ENCODE measurements at regions of chr2 and their contacts with region 1.

Region 1: DNA sequence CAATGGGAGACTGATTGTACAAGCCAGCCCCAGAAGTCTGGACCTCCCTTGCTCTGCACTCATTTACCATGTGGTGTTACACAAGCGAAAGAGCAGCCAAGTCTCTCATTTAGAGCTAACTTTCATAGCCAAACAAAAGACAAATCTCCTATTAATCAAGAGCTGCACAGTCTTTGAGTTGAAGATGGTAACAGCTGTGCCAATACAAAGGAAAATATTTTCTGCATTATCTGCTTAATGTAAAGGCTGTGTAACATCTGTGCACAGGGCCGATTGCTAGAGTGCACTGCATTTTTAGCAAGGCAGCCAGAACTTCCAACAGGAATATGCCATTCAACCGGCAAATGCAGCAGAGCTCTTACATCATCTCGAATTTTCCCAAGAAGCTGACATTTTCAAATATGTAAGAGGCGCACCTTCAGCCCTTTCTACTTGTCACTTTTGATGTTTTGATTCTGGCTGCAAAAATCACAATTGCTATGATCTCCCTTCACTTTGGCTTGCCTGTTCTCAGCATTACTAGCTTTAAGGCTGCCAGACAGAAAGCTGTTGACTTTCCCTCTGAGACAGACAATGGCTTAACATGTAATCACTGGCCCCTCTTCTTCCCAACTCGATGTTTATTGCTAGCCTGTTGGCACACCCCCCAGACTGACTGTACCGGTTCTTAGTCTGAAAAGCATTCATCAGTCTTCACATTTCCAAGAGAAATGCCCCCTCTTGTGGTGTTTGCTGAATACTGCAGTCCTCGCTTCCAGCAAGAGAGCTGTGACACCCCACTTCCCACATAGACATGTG is 96.9 kb upstream of the TANK start:
- DNase-seq: peak; percentile 51
- ATAC-seq: peak; percentile 96
- H3K4me3 ChIP-seq: no peak overlapping the region
- H3K27ac ChIP-seq: no peak overlapping the region
- H3K4me1 ChIP-seq: no peaks in the 10 kb centered on the region; the same call in 1 of the 2 replicates
- H3K27me3 ChIP-seq: no peaks in the 10 kb centered on the region
- CTCF ChIP-seq: peak; percentile 88 to 91 (median 89)
- EP300 ChIP-seq: no peak
- POLR2A ChIP-seq: no peak
- RAD21 ChIP-seq: peak; percentile 84

Region 2: DNA sequence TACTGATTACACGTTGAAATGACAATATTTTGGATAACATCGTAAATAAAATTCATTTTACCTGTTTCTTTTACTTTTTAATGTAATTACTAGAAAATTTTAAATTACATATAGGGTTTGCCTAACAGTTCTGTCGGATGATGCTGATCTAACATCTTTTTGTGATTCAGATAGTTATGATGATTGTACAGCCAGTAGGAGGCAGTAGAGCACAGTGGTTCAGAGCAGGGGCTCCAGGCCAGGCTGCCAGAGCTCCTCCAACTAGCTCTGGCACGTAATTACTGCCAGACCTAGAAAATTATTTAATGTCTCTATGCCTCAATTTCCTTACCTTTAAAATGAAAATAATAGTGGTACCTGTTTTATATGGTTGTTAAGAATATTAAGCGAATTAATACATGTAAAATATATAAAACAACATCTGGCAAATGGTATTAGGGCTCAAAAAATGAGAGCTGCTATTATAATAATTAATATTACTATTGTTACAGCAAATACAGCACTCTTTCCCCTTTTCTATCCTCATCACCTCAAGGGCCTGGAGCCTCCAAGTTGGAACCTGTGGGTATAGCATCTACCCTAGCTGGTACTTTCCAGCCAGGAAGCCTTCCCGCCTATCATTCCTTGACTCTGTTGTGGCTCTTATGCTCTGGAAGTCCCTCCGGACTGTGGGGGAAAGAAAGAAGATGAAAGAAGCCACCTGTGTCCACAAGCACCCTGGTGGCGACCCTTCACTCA is 953.3 kb before region 1 on chr2:
- CTCF ChIA-PET with region 1: interaction called, 3 read pairs
- POLR2A ChIA-PET with region 1: no interaction called
- RAD21 ChIA-PET with region 1: interaction called, 4 read pairs
- SMC1A ChIA-PET with region 1: no interaction called
- in situ Hi-C with region 1: no loop called
- intact Hi-C with region 1: loop called (anchors 10 kb)
- DNase-seq: no peak
- ATAC-seq: peak; percentile 84
- H3K4me3 ChIP-seq: no peak overlapping the region
- H3K27ac ChIP-seq: no peak overlapping the region
- H3K4me1 ChIP-seq: peaks cover 13% of the 10 kb centered on the region
- H3K27me3 ChIP-seq: no peaks in the 10 kb centered on the region
- CTCF ChIP-seq: peak; percentile 68 to 87 (median 80)
- EP300 ChIP-seq: no peak
- POLR2A ChIP-seq: no peak
- RAD21 ChIP-seq: peak; percentile 90

Region 3: GRCh38 chr2:160918906-160919503 is 144.4 kb before region 1 on chr2:
- CTCF ChIA-PET with region 1: interaction called, 12 read pairs
- POLR2A ChIA-PET with region 1: no interaction called
- RAD21 ChIA-PET with region 1: no interaction called
- SMC1A ChIA-PET with region 1: interaction called, 3 read pairs
- in situ Hi-C with region 1: no loop called
- intact Hi-C with region 1: no loop called
- DNase-seq: no peak
- ATAC-seq: peak; percentile 71
- H3K4me3 ChIP-seq: no peak overlapping the region
- H3K27ac ChIP-seq: no peak overlapping the region
- H3K4me1 ChIP-seq: no peaks in the 10 kb centered on the region
- H3K27me3 ChIP-seq: no peaks in the 10 kb centered on the region
- CTCF ChIP-seq: peak; percentile 42 to 58 (median 54); a peak in 4 of 6 replicates
- EP300 ChIP-seq: no peak
- POLR2A ChIP-seq: no peak
- RAD21 ChIP-seq: peak; percentile 33

Region 4: DNA sequence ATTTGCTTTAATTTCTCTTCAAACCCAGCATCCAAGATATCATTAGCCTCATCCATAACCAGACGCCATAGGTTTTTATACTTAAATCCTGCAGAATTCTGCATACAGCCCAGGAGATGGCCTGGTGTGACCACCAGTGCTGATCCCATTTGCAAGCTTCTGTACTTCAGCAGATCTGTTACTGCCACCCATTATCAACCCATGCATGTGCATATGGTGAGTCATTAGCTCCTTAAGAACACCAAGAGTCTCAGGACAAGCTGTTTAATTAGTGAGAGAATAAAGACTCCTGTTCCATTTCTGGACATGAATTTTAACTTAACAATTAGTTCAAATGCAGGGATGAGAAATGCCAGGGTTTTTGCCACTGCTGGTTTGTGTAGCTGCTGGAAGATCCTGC is 13.8 kb before region 1 on chr2:
- CTCF ChIA-PET with region 1: interaction called, 27 read pairs
- POLR2A ChIA-PET with region 1: no interaction called
- RAD21 ChIA-PET with region 1: interaction called, 9 read pairs
- SMC1A ChIA-PET with region 1: interaction called, 4 read pairs
- in situ Hi-C with region 1: no loop called
- intact Hi-C with region 1: no loop called
- DNase-seq: no peak
- ATAC-seq: no peak
- H3K4me3 ChIP-seq: no peak overlapping the region
- H3K27ac ChIP-seq: no peak overlapping the region
- H3K4me1 ChIP-seq: no peaks in the 10 kb centered on the region
- H3K27me3 ChIP-seq: no peaks in the 10 kb centered on the region; a peak in 1 of 4 replicates
- CTCF ChIP-seq: no peak
- EP300 ChIP-seq: no peak
- POLR2A ChIP-seq: no peak
- RAD21 ChIP-seq: no peak

Region 5: DNA sequence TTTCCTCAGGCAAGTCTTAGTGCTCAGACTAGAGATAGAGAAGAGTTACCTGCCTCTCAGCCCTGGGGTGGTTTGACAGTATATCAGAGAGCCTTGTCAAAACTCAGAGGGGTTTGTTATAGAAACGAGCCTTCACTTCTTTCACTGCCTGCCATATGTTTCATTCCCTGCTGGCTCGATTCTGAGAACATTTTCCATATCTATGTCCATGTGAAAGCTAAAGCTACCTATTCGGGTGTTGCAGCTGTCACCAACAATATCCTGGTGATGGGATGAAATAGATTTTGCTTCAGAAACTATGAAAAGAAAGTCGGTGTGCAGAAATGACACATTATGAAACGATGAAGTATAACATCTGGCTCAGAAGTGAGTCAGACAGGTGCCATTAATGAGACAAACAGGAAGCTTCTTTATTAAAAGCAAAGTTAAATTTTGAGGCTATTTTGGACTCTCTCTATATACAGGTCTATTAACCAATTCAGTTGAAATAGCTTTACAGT is 40.7 kb after region 1 on chr2:
- CTCF ChIA-PET with region 1: interaction called, 23 read pairs
- POLR2A ChIA-PET with region 1: interaction called, 3 read pairs
- RAD21 ChIA-PET with region 1: interaction called, 14 read pairs
- SMC1A ChIA-PET with region 1: interaction called, 17 read pairs
- in situ Hi-C with region 1: no loop called
- intact Hi-C with region 1: no loop called
- DNase-seq: peak; percentile 72
- ATAC-seq: peak; percentile 89
- H3K4me3 ChIP-seq: 0 out of 2 replicates have a peak overlapping the region, but pooled peaks have one; percentile 6
- H3K27ac ChIP-seq: peak overlapping the region; percentile 55
- H3K4me1 ChIP-seq: peaks cover 19% of the 10 kb centered on the region
- H3K27me3 ChIP-seq: no peaks in the 10 kb centered on the region
- CTCF ChIP-seq: no peak
- EP300 ChIP-seq: peak in 1 of 2 experiments; percentile 89; a peak in 3 of 4 replicates
- POLR2A ChIP-seq: no peak
- RAD21 ChIP-seq: peak; percentile 16; the same call in 1 of the 2 replicates

Region 6: DNA sequence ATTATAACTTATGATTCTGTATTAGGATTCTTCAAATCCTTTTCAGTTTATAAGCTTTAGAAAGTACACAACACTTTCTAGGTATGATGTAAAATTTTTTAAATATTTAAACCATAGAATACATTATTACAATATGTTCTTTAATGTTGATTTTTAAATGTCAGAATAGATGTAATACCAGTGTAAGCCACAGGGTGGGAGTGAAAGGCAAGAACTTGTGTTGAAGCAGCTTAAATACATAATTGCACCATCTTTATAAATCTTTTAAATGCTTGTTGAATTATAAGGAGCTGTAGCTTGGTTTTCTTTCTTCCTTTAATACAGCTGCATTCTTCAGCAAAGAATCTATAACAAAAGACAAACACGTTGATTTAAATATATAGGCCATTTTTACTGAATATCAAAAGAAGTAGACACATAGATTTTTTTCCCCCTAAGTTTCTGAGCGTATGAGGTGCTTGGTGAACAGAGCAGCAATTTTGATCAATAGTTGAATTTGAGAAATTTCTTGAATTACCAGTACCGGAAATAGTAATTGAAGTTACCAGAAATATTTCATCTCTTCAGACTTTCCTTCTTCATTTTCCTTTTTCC is 159.9 kb after region 1 on chr2:
- CTCF ChIA-PET with region 1: interaction called, 6 read pairs
- POLR2A ChIA-PET with region 1: no interaction called
- RAD21 ChIA-PET with region 1: interaction called, 4 read pairs
- SMC1A ChIA-PET with region 1: interaction called, 11 read pairs
- in situ Hi-C with region 1: no loop called
- intact Hi-C with region 1: no loop called
- DNase-seq: no peak
- ATAC-seq: peak; percentile 81
- H3K4me3 ChIP-seq: no peak overlapping the region
- H3K27ac ChIP-seq: no peak overlapping the region
- H3K4me1 ChIP-seq: no peaks in the 10 kb centered on the region
- H3K27me3 ChIP-seq: no peaks in the 10 kb centered on the region
- CTCF ChIP-seq: peak; percentile 51 to 65 (median 55)
- EP300 ChIP-seq: no peak
- POLR2A ChIP-seq: no peak
- RAD21 ChIP-seq: peak; percentile 71